Mammary epithelial cell (primary cell): ENCODE measurements at regions of chr15 and their contacts with region 1.

Region 1: DNA sequence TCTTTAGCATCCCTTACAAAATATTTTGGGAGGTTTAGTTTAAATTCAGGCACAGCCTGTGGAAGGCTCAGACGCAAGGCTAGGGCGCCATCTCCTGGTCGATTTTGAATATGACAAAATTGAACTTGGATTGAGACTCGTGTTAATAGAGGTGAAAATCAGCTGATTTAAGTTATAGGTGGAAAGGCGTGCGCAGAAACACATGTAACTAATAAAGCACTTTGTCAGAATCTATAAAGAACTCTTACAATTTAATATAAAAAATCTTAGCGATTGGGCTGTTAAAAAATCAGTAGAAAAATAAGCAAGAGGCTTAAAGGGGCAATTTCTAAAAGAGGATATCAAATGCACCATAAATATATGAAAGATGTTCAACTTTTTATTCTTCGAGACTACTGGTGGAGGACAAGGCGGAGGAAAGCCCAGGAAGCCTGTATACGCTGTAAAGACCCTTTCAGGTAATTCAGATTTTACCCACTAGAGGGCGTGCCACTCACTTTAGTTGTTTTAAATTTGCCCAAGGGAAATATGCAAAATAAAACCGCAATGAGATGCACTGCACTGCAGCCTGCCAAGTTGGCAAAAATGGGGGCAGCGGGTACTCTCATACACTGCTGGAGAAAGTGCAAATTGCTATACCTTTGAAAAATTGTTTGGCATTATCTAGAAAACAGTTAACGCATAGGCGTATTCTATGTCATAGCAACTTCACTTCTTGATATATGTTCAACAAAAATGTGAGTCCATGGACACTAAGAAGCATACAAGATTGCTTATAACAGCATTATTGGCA is 64.7 kb downstream of the SLC30A4 start:
- DNase-seq: peak; percentile 66
- H3K4me3 ChIP-seq: peak overlapping the region; percentile 26 to 49 (median 47)
- H3K27ac ChIP-seq: peak overlapping the region; percentile 76
- H3K4me1 ChIP-seq: peaks cover 38% of the 10 kb centered on the region
- H3K27me3 ChIP-seq: no peaks in the 10 kb centered on the region
- CTCF ChIP-seq: peak; percentile 54 to 70

Region 2: GRCh38 chr15:45307230-45307924 is 150.5 kb before region 1 on chr15:
- CTCF ChIA-PET with region 1: no interaction called
- dilution Hi-C with region 1: no loop called
- in situ Hi-C with region 1: no loop called
- intact Hi-C with region 1: loop called (anchors 2 kb)
- DNase-seq: peak; percentile 40
- H3K4me3 ChIP-seq: peak overlapping the region in 1 of 3 experiments; percentile 19
- H3K27ac ChIP-seq: no peak overlapping the region
- H3K4me1 ChIP-seq: no peaks in the 10 kb centered on the region
- H3K27me3 ChIP-seq: no peaks in the 10 kb centered on the region
- CTCF ChIP-seq: peak; percentile 30 to 53

Region 3: GRCh38 chr15:45424429-45424828 is 33.4 kb before region 1 on chr15:
- CTCF ChIA-PET with region 1: interaction called, 3 read pairs
- dilution Hi-C with region 1: no loop called
- in situ Hi-C with region 1: no loop called
- intact Hi-C with region 1: loop called (anchors 5 kb)
- DNase-seq: no peak
- H3K4me3 ChIP-seq: no peak overlapping the region
- H3K27ac ChIP-seq: no peak overlapping the region
- H3K4me1 ChIP-seq: no peaks in the 10 kb centered on the region
- H3K27me3 ChIP-seq: no peaks in the 10 kb centered on the region
- CTCF ChIP-seq: no peak

Region 4: DNA sequence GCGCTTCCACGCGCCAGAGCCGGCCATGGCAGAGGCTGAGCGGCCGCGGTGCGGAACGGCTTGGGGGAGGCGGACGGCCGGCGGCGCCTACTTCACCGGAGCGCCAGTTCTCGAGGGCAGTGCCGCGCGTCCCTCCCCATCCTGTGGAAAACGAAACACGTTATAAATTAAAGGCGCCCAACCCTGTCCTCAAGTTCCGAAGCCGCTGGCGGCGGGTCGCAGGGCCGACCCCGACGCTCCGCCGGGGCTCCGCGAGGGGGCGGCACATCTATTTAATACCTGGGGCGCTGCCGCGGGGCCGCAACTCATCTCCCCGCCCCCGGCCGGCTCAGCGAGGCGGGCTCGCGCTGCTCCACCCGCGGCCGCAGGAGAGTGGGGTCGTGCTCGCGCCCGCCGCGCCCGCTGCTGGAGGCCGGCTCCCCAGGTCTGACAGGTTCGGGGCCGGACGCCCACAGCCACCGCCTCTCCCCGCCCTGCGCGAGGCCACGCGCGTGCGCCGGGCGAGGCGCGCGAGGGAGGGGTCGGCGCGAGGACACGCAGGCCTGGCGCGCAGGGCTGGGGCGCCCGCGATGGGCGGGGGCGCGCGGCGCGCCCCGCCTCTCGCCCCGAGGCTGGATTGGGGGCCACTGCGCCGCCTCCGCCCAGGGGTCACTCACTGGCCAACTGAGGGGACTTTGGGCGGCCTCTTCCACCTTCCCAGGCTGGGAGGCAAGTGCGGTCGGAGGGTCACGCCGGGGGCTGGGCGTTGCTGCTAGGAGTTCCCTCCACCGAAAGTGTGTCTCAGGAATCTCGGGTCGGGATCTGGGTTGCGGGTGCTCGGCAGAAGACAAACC is 64.7 kb after region 1 on chr15 and contains the start of gene SLC30A4:
- CTCF ChIA-PET with region 1: no interaction called
- dilution Hi-C with region 1: no loop called
- in situ Hi-C with region 1: no loop called
- intact Hi-C with region 1: loop called (anchors 2 kb)
- DNase-seq: peak; percentile 49
- H3K4me3 ChIP-seq: peak within 1 kb of the TSS; percentile 40 to 85 (median 66)
- H3K27ac ChIP-seq: peak within 1 kb of the TSS; percentile 22
- H3K4me1 ChIP-seq: peaks cover 19% of the 10 kb centered on the region
- H3K27me3 ChIP-seq: no peaks in the 10 kb centered on the region
- CTCF ChIP-seq: peak in 1 of 2 donors; percentile 38
- total RNA-seq, gene SLC30A4: 6.8 to 11.2 TPM

Region 5: DNA sequence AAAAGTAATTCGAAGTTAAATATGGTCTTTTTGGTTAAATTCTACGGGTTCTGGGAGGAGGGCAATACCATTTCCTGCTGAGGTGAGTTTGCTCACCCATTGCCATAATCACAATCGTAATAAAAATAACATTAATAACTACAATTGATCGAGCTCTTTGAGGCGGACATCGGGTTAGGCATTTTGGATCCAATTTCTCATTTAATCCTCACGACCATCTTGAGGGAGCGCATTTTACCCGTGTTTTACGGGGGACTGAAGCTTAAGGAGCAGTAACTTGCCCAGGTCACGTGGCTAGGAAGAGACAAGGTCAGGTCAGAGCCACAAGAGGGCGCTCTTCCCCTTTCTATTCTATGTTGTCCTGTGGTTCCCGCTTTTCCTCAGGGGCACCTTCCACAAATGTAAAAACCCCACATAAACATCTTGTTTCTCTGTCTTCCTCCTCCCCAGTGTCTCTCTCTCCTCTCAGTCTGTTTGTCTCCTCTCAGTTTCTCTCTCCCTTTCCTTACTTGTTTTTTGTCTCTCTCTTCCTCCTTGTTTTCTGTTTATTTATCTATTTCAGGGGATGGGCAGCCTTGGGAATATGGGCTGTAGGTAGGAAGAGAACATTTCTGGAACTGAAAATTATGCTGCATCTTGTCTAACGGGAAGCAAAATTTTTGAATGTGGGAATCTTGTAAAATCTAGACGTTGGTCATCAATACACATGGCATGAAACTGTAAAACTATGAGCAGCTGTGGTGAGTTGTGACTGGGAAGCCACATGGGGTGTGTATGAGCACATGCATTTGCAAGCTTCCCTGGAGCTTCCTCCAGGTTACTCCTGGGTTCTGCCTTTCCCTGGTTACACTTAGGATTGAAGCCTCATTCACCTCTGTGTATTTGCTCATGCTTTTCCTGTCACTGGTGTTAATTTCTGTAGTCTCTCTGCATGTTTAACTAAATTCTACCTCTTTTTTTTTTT is 248.0 kb after region 1 on chr15:
- CTCF ChIA-PET with region 1: no interaction called
- dilution Hi-C with region 1: no loop called
- in situ Hi-C with region 1: no loop called
- intact Hi-C with region 1: loop called (anchors 5 kb)
- DNase-seq: peak; percentile 70
- H3K4me3 ChIP-seq: peak overlapping the region; percentile 48 to 60 (median 53)
- H3K27ac ChIP-seq: peak overlapping the region; percentile 0
- H3K4me1 ChIP-seq: peaks cover 9% of the 10 kb centered on the region
- H3K27me3 ChIP-seq: no peaks in the 10 kb centered on the region
- CTCF ChIP-seq: peak; percentile 67 to 85

Region 6: DNA sequence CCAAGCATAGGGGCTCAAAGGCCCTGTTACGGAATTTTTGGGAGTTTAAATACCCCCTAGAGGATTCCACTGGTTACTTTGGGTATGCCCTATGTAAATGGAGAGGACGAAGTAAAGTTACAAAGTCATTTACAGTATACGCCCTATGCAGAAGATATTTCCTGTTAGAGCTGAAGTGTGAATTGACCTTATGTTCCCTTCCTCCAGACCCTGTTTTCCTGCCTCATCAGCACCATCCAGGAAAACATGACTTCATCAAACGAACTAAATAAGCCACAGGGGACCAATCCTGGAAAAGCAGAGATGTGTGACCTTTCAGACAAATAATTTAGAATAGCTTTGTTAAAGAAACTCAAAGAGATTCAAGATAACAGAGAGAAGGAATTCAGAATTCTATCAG is 354.4 kb after region 1 on chr15:
- CTCF ChIA-PET with region 1: no interaction called
- dilution Hi-C with region 1: no loop called
- in situ Hi-C with region 1: no loop called
- intact Hi-C with region 1: no loop called
- DNase-seq: no peak
- H3K4me3 ChIP-seq: no peak overlapping the region
- H3K27ac ChIP-seq: no peak overlapping the region
- H3K4me1 ChIP-seq: no peaks in the 10 kb centered on the region
- H3K27me3 ChIP-seq: no peaks in the 10 kb centered on the region
- CTCF ChIP-seq: no peak